ENCODE measurements at regions of chr17 and their contacts with region 1.

Region 1: GRCh38 chr17:73645050-73645978 is 1.1 kb upstream of the SDK2 start:
- DNase-seq: peak; percentile 66
- H3K4me3 ChIP-seq: peak overlapping the region in 2 of 3 experiments; percentile 67 to 79
- H3K27ac ChIP-seq: no peak overlapping the region
- H3K4me1 ChIP-seq: peaks cover 12% of the 10 kb centered on the region
- H3K27me3 ChIP-seq: no peaks in the 10 kb centered on the region
- CTCF ChIP-seq: no peak

Region 2: DNA sequence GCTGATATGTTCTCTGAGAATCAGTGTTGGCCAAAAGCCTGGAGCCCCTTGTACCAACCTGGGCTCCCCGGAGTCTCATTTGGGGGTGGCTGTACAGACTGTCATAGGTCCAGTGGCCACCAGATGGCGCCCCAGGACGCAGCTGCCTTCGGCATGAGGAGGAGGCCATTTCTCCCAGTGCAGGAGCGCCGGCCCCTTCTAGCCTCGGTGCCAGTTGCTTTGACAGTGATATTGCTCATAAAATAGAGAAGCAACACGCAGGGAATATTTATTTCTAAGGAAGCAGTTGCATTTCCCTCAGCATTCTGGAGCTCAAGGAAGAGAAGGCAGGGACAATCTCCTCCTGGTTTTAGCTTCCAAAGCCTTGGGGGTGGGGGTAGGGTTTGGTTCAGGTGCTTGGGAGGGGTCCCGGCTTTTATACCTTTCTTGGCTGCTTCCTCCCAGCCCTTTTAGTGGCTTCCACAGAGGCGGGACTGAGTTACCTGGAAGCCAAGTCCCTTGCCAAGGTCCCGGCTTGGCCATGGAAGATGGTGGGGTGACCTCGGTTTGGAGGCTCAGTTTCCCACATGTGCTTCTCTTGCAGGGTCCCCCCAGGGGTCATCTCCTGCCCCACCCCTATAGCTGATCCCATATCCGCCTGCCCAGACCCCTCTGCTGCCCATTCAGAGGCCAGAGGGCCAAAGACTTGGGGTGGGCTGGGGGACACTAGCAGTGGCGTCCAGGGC is 215.7 kb before region 1 on chr17:
- CTCF ChIA-PET with region 1: no interaction called
- dilution Hi-C with region 1: no loop called
- in situ Hi-C with region 1: no loop called
- intact Hi-C with region 1: loop called (anchors 1 kb)
- DNase-seq: peak; percentile 59
- H3K4me3 ChIP-seq: no peak overlapping the region
- H3K27ac ChIP-seq: no peak overlapping the region
- H3K4me1 ChIP-seq: no peaks in the 10 kb centered on the region
- H3K27me3 ChIP-seq: no peaks in the 10 kb centered on the region
- CTCF ChIP-seq: peak; percentile 91 to 96

Region 3: DNA sequence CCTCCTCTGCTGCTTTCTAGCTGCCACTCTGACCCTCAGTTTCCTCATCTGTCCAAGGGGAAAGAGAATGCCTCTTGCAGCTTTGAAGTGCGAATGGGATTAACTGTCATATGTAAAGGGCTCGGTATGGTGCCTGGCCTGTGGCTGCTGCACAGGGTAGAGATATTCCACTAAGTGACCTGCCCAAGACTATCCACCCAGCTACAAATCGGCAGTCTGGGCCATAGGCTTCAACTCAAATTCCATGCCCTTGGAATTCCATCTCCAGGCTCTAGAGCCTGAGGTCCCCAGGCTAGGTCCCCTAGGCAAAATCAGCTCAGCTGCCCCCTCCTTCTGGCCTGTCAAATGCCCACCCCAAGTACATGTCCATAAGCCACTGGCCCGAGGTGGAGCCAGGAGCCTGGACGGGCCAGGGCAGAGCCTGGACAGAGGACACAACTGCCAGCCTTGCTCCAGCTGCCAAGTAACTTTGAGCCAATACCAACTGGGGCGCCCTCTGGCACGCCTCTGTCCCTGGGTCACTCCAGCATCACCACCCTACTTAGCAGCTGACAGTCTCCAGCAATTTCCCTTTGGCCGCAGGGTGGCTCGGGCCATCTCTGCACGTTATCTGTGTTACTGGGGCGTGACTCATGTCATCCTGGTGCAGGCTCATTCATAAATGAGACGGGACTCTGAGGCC is 58.3 kb before region 1 on chr17:
- CTCF ChIA-PET with region 1: interaction called, 12 read pairs
- dilution Hi-C with region 1: no loop called
- in situ Hi-C with region 1: loop called in 1 of 2 experiments (anchors 10 kb)
- intact Hi-C with region 1: loop called (anchors 2 kb)
- DNase-seq: no peak
- H3K4me3 ChIP-seq: no peak overlapping the region
- H3K27ac ChIP-seq: no peak overlapping the region
- H3K4me1 ChIP-seq: peaks cover 15% of the 10 kb centered on the region
- H3K27me3 ChIP-seq: no peaks in the 10 kb centered on the region
- CTCF ChIP-seq: peak in 1 of 2 donors; percentile 51

Region 4: DNA sequence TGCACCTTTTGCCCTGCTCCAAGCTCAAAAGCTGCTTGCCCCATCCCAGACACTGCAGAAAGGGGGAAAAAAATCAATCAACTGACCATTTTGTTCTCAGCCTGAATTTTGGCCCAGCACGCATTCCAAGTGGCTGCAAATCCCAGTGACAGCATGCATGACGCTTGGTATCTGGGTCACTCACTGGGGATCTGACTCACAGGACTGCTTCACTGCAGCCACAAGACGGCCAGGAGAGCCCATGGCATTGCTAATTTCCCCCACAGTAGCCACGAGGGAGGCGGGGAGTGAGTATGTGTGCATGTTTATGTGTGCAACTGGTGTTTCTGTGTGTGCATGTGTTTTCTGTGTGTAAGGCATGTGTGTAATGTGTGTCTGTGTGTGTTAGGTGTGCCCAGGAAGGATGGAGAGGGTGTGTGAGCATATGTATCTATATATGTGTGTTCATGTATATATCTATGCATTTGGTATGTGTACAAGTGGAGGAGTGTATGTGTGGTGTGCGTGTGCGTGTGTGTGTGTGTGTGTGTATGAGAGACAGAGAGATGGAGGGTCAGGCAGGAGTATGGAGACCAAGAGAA is 34.9 kb before region 1 on chr17:
- CTCF ChIA-PET with region 1: no interaction called
- dilution Hi-C with region 1: no loop called
- in situ Hi-C with region 1: no loop called
- intact Hi-C with region 1: no loop called
- DNase-seq: no peak
- H3K4me3 ChIP-seq: no peak overlapping the region
- H3K27ac ChIP-seq: no peak overlapping the region
- H3K4me1 ChIP-seq: peaks cover 12% of the 10 kb centered on the region
- H3K27me3 ChIP-seq: no peaks in the 10 kb centered on the region
- CTCF ChIP-seq: no peak

Region 5: DNA sequence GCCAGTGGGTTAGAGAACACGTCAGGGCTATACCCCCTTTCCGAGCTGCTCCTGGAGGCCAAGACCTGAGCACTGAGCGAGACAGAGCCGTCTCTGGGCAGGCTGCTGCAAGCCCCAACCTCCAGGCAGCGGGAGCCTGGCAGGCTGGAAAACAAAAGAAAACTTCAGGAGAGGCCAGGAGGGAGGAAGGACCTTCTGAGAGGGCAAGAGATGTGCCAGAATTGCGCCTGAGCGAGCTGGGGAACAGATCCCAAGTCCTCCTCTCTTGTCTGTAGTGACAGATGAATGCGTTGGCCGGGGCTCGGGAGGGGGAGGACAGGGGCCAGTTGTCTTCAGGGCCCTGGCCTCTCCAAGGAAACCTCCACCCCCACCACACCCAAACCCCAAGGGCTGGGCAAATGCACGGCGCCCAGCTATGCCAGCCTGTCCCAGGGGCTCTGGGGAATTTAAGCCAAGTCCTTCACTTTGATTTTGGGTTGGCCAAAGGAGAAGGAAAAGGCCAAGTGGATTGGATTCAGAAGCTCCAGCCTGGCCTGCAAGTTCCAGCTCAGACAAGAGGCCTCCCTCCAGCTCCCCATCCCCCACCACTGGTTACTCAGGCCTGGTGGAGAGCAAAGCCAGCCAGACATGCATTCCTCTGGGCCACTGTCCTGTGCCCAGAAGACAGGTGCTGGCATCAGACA is 19.2 kb before region 1 on chr17:
- CTCF ChIA-PET with region 1: no interaction called
- dilution Hi-C with region 1: no loop called
- in situ Hi-C with region 1: no loop called
- intact Hi-C with region 1: loop called (anchors 1 kb)
- DNase-seq: peak; percentile 91
- H3K4me3 ChIP-seq: no peak overlapping the region
- H3K27ac ChIP-seq: peak overlapping the region; percentile 98
- H3K4me1 ChIP-seq: peaks cover 63% of the 10 kb centered on the region
- H3K27me3 ChIP-seq: no peaks in the 10 kb centered on the region
- CTCF ChIP-seq: no peak

Region 6: GRCh38 chr17:73841431-73842060 is 196.2 kb after region 1 on chr17:
- CTCF ChIA-PET with region 1: interaction called, 4 read pairs
- dilution Hi-C with region 1: no loop called
- in situ Hi-C with region 1: no loop called
- intact Hi-C with region 1: loop called (anchors 2 kb)
- DNase-seq: no peak
- H3K4me3 ChIP-seq: no peak overlapping the region
- H3K27ac ChIP-seq: no peak overlapping the region
- H3K4me1 ChIP-seq: no peaks in the 10 kb centered on the region
- H3K27me3 ChIP-seq: no peaks in the 10 kb centered on the region
- CTCF ChIP-seq: peak; percentile 45 to 78

Region 7: DNA sequence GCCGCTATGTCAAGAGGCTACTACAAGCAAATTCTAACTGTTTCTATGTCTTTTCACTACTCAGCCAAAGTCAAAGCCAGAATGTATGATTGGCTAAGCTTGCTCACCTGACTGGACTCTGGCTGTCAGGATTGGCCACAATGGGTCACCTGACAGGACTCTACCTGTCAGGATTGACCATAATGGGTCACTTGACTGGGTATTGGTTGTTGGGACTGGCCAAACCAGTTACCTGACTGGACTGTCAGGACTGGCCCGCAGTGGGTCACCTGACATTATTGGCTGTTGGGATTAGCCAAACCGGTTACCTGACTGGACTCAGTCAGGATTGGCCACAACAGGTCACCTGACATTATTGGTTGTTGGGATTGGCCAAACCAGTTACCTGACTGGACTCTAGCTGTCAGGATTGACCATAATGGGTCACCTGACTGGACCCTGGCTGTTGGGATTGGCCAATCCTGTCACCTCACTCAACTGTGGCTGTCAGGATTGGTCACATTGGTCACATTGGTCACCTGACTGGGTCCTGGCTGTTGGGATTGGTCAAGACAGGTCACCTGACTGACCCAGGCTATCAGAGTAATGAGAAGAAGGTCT is 206.5 kb after region 1 on chr17:
- CTCF ChIA-PET with region 1: no interaction called
- dilution Hi-C with region 1: no loop called
- in situ Hi-C with region 1: no loop called
- intact Hi-C with region 1: no loop called
- DNase-seq: no peak
- H3K4me3 ChIP-seq: no peak overlapping the region
- H3K27ac ChIP-seq: no peak overlapping the region
- H3K4me1 ChIP-seq: no peaks in the 10 kb centered on the region
- H3K27me3 ChIP-seq: no peaks in the 10 kb centered on the region
- CTCF ChIP-seq: no peak

Region 8: DNA sequence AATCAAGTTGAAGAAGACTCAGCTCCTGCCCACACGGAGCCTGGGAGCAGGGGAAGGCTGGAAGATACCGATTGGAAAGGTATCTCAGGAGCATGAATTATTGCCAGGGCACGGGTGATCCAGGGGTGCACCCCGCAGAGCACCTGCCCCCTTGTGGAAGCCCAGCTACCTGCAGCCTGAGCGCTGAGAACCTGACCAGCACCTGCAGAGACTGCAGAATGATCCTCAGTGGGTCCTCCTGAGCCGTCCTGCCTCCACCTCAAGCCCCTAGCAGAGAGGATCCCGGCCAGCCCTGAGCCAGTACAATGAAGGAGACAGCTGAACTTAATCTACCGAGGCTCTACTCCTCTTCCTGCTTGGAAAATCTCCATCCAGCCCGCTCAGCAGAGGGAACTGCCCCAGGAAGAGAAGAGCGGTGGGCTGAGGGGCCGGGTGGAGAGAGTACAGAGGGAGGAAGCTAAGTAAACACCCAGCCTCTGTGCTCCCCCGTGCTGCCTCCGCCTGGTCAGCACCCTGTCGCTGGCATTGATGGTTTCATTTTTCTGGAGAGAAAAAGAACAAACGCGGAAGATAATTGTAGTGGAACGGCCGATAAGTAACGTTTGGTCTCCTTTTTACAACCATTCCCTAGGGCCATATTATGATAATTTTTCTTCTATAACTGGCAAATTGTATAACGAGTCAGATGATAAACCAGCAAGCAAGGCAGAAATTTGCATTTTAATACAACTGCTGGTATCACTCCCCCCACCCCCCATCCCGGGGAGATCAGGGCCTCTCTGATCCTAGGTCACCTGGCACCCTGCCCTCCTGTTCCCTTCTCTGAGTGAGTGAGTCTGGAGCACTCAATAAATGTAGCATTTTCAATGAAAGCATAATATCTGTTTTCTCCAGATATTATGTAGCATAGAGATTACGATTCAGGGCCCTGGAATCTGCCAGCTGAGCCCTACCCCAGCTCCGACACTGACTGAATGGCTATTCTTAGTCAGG is 353.6 kb after region 1 on chr17:
- CTCF ChIA-PET with region 1: no interaction called
- dilution Hi-C with region 1: no loop called
- in situ Hi-C with region 1: no loop called
- intact Hi-C with region 1: loop called (anchors 1 kb)
- DNase-seq: peak; percentile 22
- H3K4me3 ChIP-seq: no peak overlapping the region
- H3K27ac ChIP-seq: no peak overlapping the region
- H3K4me1 ChIP-seq: no peaks in the 10 kb centered on the region
- H3K27me3 ChIP-seq: no peaks in the 10 kb centered on the region
- CTCF ChIP-seq: peak; percentile 65 to 93